SK-N-SH (cell line): ENCODE measurements at regions of chr17 and their contacts with region 1.

Region 1: GRCh38 chr17:74736513-74737298 is at the start of gene RAB37:
- DNase-seq: peak; percentile 82
- H3K4me3 ChIP-seq: no peak within 1 kb of the TSS; a peak in 1 of 4 replicates
- H3K27ac ChIP-seq: no peak within 1 kb of the TSS
- H3K4me1 ChIP-seq: no peaks in the 10 kb centered on the region; a peak in 1 of 4 replicates
- H3K27me3 ChIP-seq: peaks cover 54% of the 10 kb centered on the region
- CTCF ChIP-seq: peak; percentile 43
- EP300 ChIP-seq: no peak
- RAD21 ChIP-seq: peak; percentile 56
- polyA plus RNA-seq, gene RAB37: 0.13 and 0.25 TPM in 2 replicates

Region 2: GRCh38 chr17:74601944-74602572 is 134.6 kb before region 1 on chr17:
- CTCF ChIA-PET with region 1: interaction called, 15 read pairs
- POLR2A ChIA-PET with region 1: no interaction called
- DNase-seq: peak; percentile 68
- H3K4me3 ChIP-seq: peak overlapping the region in 1 of 2 experiments; percentile 35; a peak in 1 of 4 replicates
- H3K27ac ChIP-seq: no peak overlapping the region
- H3K4me1 ChIP-seq: peaks cover 0 to 7% of the 10 kb centered on the region in 2 experiments; a peak in 1 of 4 replicates
- H3K27me3 ChIP-seq: no peaks in the 10 kb centered on the region
- CTCF ChIP-seq: peak; percentile 40
- EP300 ChIP-seq: no peak
- RAD21 ChIP-seq: peak; percentile 68

Region 3: GRCh38 chr17:74677558-74678466 is 58.9 kb before region 1 on chr17:
- CTCF ChIA-PET with region 1: interaction called, 55 read pairs
- POLR2A ChIA-PET with region 1: interaction called, 3 read pairs
- DNase-seq: peak; percentile 77
- H3K4me3 ChIP-seq: no peak overlapping the region
- H3K27ac ChIP-seq: no peak overlapping the region; a peak in 1 of 4 replicates
- H3K4me1 ChIP-seq: peaks cover 0 to 8% of the 10 kb centered on the region in 2 experiments; a peak in 1 of 4 replicates
- H3K27me3 ChIP-seq: no peaks in the 10 kb centered on the region
- CTCF ChIP-seq: no peak
- EP300 ChIP-seq: no peak
- RAD21 ChIP-seq: no peak

Region 4: GRCh38 chr17:74723891-74724290 is 12.8 kb before region 1 on chr17:
- CTCF ChIA-PET with region 1: interaction called, 77 read pairs
- POLR2A ChIA-PET with region 1: no interaction called
- DNase-seq: no peak
- H3K4me3 ChIP-seq: no peak overlapping the region
- H3K27ac ChIP-seq: no peak overlapping the region
- H3K4me1 ChIP-seq: no peaks in the 10 kb centered on the region
- H3K27me3 ChIP-seq: no peaks in the 10 kb centered on the region; the same call in 1 of the 2 replicates
- CTCF ChIP-seq: no peak
- EP300 ChIP-seq: no peak
- RAD21 ChIP-seq: no peak

Region 5: GRCh38 chr17:74770498-74771318 is 34.0 kb after region 1 on chr17:
- CTCF ChIA-PET with region 1: interaction called, 104 read pairs
- POLR2A ChIA-PET with region 1: interaction called, 3 read pairs
- DNase-seq: peak; percentile 91
- H3K4me3 ChIP-seq: no peak overlapping the region
- H3K27ac ChIP-seq: no peak overlapping the region
- H3K4me1 ChIP-seq: peaks cover 23 to 29% of the 10 kb centered on the region in 2 experiments; a peak in 3 of 4 replicates
- H3K27me3 ChIP-seq: no peaks in the 10 kb centered on the region
- CTCF ChIP-seq: peak; percentile 85
- EP300 ChIP-seq: no peak
- RAD21 ChIP-seq: peak; percentile 98

Region 6: GRCh38 chr17:74807925-74808324 is 71.2 kb after region 1 on chr17:
- CTCF ChIA-PET with region 1: interaction called, 15 read pairs
- POLR2A ChIA-PET with region 1: no interaction called
- DNase-seq: peak; percentile 93
- H3K4me3 ChIP-seq: no peak overlapping the region
- H3K27ac ChIP-seq: peak overlapping the region in 1 of 2 experiments; percentile 81; a peak in 2 of 4 replicates
- H3K4me1 ChIP-seq: peaks cover 0 to 57% of the 10 kb centered on the region in 2 experiments; a peak in 2 of 4 replicates
- H3K27me3 ChIP-seq: no peaks in the 10 kb centered on the region
- CTCF ChIP-seq: no peak
- EP300 ChIP-seq: peak in 1 of 2 experiments; percentile 81; a peak in 2 of 4 replicates
- RAD21 ChIP-seq: peak; percentile 30; the same call in 1 of the 2 replicates